ENCODE measurements at regions of chr7 and their contacts with region 1.

Region 1: DNA sequence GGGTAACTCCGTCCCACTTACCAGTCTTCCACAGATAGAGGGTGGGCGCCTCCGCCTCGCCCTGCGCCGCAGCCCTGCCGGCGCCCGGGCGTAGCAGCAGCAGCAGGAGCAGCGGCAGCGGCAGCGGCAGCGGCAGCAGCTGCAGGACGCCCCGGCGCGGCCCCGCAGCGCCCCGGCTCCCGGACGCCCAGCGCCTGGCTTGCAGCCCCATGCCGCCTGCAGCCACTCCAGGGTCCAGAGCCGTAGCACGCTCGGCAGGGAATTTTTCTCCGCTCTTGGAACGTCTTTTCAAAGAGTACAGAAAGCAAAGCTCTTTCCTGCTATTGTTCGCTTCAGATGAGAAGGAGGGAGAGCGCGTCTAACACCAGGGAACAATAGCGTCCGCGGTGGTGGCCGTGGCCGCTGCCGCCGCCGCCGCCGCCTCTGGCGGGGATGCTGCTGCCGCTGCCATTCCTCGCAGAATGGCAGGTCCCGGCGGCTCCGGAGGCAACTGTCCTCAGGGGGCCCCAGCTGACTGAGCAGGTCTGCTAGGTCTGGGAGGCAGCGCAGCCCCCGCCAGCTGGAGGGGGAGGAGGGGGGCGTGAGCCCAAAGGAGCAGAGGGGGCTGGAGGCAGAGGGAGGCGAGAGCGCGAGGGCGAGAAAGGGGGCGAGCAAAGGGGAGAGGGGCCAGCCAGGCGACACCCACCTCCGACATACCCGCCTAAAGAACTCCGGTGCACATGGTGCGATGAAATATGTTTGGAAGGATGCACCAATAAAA is at the start of gene THSD7A:
- DNase-seq: peak; percentile 23
- H3K4me3 ChIP-seq: peak within 1 kb of the TSS; percentile 42
- H3K27ac ChIP-seq: no peak within 1 kb of the TSS
- H3K4me1 ChIP-seq: no peaks in the 10 kb centered on the region
- H3K27me3 ChIP-seq: no peaks in the 10 kb centered on the region
- CTCF ChIP-seq: no peak
- total RNA-seq, gene THSD7A: 2.1 to 2.3 TPM

Region 2: DNA sequence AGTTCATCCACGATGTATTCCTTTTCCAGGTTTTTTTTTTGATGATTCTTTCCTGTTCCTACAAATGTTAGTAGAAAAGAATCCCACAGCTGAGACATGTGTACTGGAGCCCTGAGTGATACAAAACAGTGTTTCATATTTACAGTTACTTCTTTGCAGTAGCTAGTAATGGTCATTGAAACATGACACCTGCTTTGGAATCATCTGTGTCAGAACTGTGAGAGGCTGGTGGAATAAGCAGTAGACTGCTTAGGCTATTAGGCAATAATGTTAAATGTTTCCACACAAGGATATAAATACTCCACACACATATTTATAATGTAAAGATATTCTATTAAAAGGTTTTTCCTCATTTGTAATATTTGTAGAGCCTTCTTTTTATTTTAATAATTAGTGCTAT is 393.9 kb before region 1 on chr7:
- intact Hi-C with region 1: loop called (anchors 10 kb)
- DNase-seq: no peak
- H3K4me3 ChIP-seq: no peak overlapping the region
- H3K27ac ChIP-seq: no peak overlapping the region
- H3K4me1 ChIP-seq: no peaks in the 10 kb centered on the region
- H3K27me3 ChIP-seq: no peaks in the 10 kb centered on the region
- CTCF ChIP-seq: no peak

Region 3: DNA sequence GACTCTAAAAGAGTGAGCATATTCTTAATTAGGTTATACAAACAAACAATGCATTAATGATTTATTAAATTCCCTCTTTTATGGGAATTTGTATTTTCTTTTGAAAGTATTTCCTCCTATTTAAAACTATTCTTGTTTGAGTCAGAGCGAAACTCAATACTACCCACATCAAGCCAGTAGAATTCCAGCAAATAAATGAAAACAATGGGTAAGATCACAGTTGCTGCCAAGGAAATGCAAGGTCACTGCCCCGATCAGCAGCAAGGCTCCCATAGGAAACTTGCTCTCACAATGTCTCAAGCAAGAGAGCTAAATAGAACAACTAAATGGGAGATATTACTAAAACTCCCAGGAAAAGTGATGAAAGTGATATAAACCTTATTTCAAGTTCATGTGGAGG is 206.2 kb before region 1 on chr7:
- intact Hi-C with region 1: no loop called
- DNase-seq: no peak
- H3K4me3 ChIP-seq: no peak overlapping the region
- H3K27ac ChIP-seq: no peak overlapping the region
- H3K4me1 ChIP-seq: no peaks in the 10 kb centered on the region
- H3K27me3 ChIP-seq: no peaks in the 10 kb centered on the region
- CTCF ChIP-seq: no peak

Region 4: GRCh38 chr7:11896663-11897062 is 64.7 kb after region 1 on chr7:
- intact Hi-C with region 1: no loop called
- DNase-seq: no peak
- H3K4me3 ChIP-seq: no peak overlapping the region
- H3K27ac ChIP-seq: no peak overlapping the region
- H3K4me1 ChIP-seq: no peaks in the 10 kb centered on the region
- H3K27me3 ChIP-seq: no peaks in the 10 kb centered on the region
- CTCF ChIP-seq: no peak

Region 5: GRCh38 chr7:12322284-12322902 is 490.5 kb after region 1 on chr7:
- intact Hi-C with region 1: loop called (anchors 10 kb)
- DNase-seq: no peak
- H3K4me3 ChIP-seq: no peak overlapping the region
- H3K27ac ChIP-seq: no peak overlapping the region
- H3K4me1 ChIP-seq: no peaks in the 10 kb centered on the region
- H3K27me3 ChIP-seq: no peaks in the 10 kb centered on the region
- CTCF ChIP-seq: peak; percentile 51

Region 6: DNA sequence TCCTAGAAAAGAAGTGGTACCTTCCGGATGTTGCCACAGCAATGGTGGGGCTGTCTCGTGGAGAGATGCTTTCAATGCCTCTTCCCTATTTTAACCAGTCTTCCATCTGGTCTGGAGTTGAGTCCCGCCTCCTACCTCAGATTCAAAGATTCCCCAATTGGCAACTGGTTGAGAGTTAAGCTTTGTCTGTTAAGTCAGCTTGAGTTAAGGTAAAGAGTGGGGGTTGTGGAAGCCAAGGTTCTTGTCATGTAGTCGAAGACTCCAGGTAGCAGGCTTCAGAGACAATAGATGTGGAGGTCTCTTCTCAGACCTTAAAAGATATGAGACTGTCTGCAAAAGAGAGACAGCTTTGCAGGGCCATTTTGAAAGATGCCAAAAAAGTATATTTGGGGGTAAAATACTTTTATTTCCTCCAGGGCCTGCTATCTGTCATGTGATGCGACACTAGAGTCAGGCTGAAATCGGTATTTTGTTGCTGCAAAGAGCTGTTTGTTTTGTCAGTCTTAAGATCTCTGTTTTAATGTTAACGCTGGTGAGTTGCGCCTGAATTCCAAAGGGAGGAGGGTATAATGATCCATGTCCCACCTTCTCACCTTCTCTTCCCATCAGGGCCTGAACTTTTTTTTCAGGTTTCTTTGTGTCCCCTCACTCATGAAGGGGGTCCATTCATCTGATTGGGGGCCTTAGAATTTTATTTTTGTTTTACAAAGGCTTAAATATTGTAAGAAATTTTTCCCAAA is 698.2 kb after region 1 on chr7:
- intact Hi-C with region 1: no loop called
- DNase-seq: no peak
- H3K4me3 ChIP-seq: no peak overlapping the region
- H3K27ac ChIP-seq: no peak overlapping the region
- H3K4me1 ChIP-seq: no peaks in the 10 kb centered on the region
- H3K27me3 ChIP-seq: no peaks in the 10 kb centered on the region
- CTCF ChIP-seq: no peak